GM12878 (cell line): ENCODE measurements at regions of chr11 and their contacts with region 1.

Region 1: GRCh38 chr11:78564490-78565467 is 9.9 kb downstream of the NARS2 start:
- DNase-seq: peak; percentile 40
- ATAC-seq: peak; percentile 67
- H3K4me3 ChIP-seq: no peak overlapping the region
- H3K27ac ChIP-seq: no peak overlapping the region
- H3K4me1 ChIP-seq: peaks cover 33% of the 10 kb centered on the region
- H3K27me3 ChIP-seq: no peaks in the 10 kb centered on the region
- CTCF ChIP-seq: peak; percentile 49 to 67 (median 54)
- EP300 ChIP-seq: no peak
- POLR2A ChIP-seq: no peak
- RAD21 ChIP-seq: peak; percentile 89

Region 2: DNA sequence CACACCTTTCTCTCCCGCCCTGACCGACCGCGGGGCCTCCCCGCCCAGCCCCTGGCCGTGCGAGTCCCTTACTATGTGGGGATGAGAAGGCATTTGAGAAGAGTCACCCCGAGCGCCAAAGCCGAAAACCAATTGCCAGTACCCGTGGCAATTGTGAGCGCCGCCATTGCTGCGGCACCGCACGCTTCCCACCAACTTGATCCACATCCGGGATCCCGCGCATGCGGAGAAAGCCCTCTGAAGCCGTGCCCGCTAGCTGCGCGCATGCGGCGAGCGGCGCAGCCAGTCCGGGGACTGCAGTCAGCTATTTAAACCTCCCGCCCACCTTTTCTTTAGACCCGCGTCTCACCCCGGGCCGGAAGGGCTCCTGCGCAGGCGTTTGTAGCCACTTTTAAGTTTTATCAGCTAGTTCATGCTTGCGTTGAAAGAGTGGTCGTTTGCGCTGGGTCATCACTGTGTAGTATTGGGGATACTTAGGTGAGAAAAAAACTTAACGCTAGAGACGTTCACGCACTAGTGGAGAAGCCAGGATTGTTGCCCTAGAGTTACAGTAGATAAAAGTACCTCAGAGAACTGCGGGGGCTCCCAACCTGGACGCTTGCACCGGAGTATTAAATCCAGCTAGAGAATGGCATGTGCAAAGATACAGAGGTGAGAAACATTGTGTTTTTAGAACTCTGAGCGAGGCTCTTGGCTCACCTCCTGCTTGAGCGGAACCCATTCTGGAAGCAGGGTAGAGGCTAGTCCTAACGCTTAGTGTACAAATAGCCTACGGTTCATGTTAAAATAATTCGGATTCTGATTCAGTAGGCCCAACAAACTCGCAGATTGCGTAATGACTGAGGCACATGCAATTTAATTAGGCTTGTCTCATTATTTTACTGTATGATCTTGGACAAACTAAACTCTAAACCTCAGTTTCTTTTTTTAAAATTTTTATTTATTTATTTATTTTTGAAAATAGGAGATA is 425.1 kb before region 1 on chr11 and contains the start of gene ALG8:
- CTCF ChIA-PET with region 1: interaction called, 4 read pairs
- POLR2A ChIA-PET with region 1: no interaction called
- RAD21 ChIA-PET with region 1: interaction called, 4 read pairs
- SMC1A ChIA-PET with region 1: interaction called, 3 read pairs
- in situ Hi-C with region 1: no loop called
- intact Hi-C with region 1: loop called (anchors 5 kb)
- DNase-seq: peak; percentile 90
- ATAC-seq: peak; percentile 96
- H3K4me3 ChIP-seq: peak within 1 kb of the TSS; percentile 88
- H3K27ac ChIP-seq: peak within 1 kb of the TSS; percentile 82
- H3K4me1 ChIP-seq: peaks cover 11% of the 10 kb centered on the region
- H3K27me3 ChIP-seq: no peaks in the 10 kb centered on the region
- CTCF ChIP-seq: no peak
- EP300 ChIP-seq: 0 out of 4 replicates have a peak, but pooled peaks of 1 of the 2 experiments have one; percentile 11
- POLR2A ChIP-seq: peak; percentile 95
- RAD21 ChIP-seq: no peak
- polyA plus RNA-seq, gene ALG8: 79.1 to 105 TPM

Region 3: DNA sequence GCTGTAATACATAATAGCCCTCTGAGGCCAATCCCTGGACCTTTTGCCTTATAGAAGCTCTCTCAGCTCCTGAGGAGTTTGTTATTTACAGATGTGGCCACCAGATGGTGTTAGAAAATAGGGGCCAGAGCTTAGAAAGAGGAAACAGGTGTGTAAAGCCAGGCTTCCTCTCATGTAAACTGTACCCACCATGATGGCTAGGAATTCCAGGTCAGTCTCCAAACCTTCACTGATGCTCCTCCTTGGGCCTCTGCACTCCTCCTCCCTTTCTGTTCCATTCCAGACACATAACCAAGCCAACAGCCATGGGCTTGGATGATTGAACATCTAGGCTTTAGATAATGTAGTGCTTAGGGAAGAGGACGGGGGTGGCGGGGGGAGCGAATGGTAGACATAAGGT is 336.3 kb before region 1 on chr11:
- CTCF ChIA-PET with region 1: interaction called, 181 read pairs
- POLR2A ChIA-PET with region 1: interaction called, 4 read pairs
- RAD21 ChIA-PET with region 1: interaction called, 124 read pairs
- SMC1A ChIA-PET with region 1: interaction called, 89 read pairs
- in situ Hi-C with region 1: loop called (anchors 5 kb)
- intact Hi-C with region 1: loop called (anchors 1 kb)
- DNase-seq: peak; percentile 51
- ATAC-seq: peak; percentile 88
- H3K4me3 ChIP-seq: no peak overlapping the region
- H3K27ac ChIP-seq: peak overlapping the region; percentile 75
- H3K4me1 ChIP-seq: peaks cover 37% of the 10 kb centered on the region
- H3K27me3 ChIP-seq: no peaks in the 10 kb centered on the region
- CTCF ChIP-seq: peak; percentile 52 to 69 (median 64); a peak in 5 of 6 replicates
- EP300 ChIP-seq: no peak
- POLR2A ChIP-seq: no peak
- RAD21 ChIP-seq: peak; percentile 99

Region 4: DNA sequence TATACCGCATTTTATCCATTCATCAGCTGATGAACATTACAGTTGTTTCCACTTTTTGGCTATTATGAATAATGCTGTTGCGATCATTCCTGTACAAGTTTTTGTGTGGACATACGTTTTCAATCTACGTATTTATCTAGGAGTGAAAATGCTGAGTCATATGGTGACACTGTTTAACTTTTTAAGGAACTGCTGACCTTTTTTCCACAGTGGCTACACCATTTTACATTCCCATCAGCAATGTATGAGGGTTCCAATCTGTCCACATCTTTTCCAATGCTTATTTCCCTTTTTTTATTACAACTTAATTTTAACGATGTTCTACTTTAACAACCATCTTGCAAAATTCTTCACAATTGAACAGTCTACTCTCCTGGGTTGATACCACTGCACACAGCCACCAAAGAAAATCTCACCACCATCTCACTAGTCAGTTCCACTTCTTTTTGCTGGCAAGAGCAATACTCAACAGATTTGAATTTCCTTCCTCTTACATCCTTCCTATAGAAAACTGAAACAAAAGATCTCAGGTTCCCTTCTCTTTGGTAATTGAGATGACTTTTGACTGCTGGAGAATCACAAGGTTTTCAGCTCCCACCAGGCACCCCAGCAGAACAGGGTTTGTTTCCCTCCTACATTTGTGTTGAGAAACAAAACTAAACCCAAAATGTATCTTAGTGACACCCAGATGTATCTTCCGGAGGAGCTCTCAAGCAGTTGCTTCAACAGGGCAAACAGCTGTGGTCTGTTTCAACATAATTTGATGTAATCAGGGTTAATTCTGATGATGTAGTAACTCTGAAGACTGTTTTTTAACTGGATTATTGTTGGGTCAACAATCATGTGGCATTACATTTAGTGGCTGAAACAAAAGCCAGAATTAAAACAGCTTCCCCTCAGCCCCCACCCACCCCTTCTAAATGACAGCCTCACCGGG is 140.2 kb before region 1 on chr11:
- CTCF ChIA-PET with region 1: interaction called, 280 read pairs
- POLR2A ChIA-PET with region 1: interaction called, 3 read pairs
- RAD21 ChIA-PET with region 1: interaction called, 137 read pairs
- SMC1A ChIA-PET with region 1: interaction called, 24 read pairs
- in situ Hi-C with region 1: loop called (anchors 5 kb)
- intact Hi-C with region 1: no loop called
- DNase-seq: peak; percentile 70
- ATAC-seq: peak; percentile 12
- H3K4me3 ChIP-seq: peak overlapping the region; percentile 18; the same call in 1 of the 2 replicates
- H3K27ac ChIP-seq: peak overlapping the region; percentile 73
- H3K4me1 ChIP-seq: peaks cover 66% of the 10 kb centered on the region
- H3K27me3 ChIP-seq: no peaks in the 10 kb centered on the region
- CTCF ChIP-seq: no peak
- EP300 ChIP-seq: no peak
- POLR2A ChIP-seq: no peak
- RAD21 ChIP-seq: no peak

Region 5: DNA sequence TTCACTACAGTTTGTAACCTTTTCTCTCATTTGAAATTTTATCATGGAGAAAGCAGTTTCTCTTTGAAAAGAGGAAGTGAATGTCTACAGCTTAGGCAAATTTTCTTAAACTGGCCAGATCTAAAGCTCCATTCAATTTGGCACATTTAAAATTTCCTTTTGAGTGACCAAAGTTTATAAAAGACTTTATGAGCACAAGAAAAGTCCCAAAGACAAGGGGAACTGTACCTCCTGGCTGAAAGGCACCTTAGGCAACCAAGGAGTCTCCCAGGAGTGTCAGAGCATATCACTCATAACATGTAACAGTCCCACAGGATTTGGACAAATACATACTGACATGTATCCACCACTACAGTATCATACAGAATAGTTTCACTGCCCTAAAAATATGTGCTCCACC is 31.4 kb before region 1 on chr11:
- CTCF ChIA-PET with region 1: interaction called, 19 read pairs
- POLR2A ChIA-PET with region 1: interaction called, 3 read pairs
- RAD21 ChIA-PET with region 1: interaction called, 7 read pairs
- SMC1A ChIA-PET with region 1: interaction called, 13 read pairs
- in situ Hi-C with region 1: no loop called
- intact Hi-C with region 1: no loop called
- DNase-seq: peak; percentile 44
- ATAC-seq: peak; percentile 86
- H3K4me3 ChIP-seq: no peak overlapping the region
- H3K27ac ChIP-seq: peak overlapping the region; percentile 74
- H3K4me1 ChIP-seq: peaks cover 21% of the 10 kb centered on the region
- H3K27me3 ChIP-seq: no peaks in the 10 kb centered on the region
- CTCF ChIP-seq: no peak
- EP300 ChIP-seq: no peak
- POLR2A ChIP-seq: no peak
- RAD21 ChIP-seq: no peak

Region 6: DNA sequence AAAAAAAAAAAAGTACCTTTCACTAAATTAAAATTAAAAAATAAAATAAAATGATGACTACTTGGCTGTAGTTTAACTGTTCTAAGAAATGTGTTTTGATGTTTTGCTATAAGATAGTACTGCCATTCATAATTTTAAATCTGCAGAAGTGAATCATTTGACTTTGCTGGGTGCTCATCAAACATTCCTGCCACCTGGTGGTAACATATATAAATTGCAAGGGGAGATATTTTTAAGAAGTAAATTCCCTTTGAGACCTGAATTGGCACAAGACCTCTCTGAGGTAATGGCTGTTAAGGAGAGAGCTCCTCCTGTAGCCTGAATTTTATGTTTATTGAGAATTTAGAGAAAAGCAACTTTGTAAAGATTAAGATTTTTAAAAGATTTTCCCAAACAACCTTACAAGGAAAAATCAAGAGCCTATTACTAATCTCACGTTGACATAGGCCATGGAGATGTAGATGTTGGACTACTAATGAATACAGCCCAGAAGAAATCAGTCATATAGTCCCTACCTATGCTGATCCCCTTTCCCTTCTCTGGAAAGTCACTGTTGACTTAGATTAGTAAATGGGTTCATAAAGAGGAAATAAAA is 21.8 kb after region 1 on chr11:
- CTCF ChIA-PET with region 1: interaction called, 23 read pairs
- POLR2A ChIA-PET with region 1: no interaction called
- RAD21 ChIA-PET with region 1: interaction called, 4 read pairs
- SMC1A ChIA-PET with region 1: interaction called, 7 read pairs
- in situ Hi-C with region 1: no loop called
- intact Hi-C with region 1: no loop called
- DNase-seq: no peak
- ATAC-seq: no peak
- H3K4me3 ChIP-seq: no peak overlapping the region
- H3K27ac ChIP-seq: no peak overlapping the region
- H3K4me1 ChIP-seq: no peaks in the 10 kb centered on the region
- H3K27me3 ChIP-seq: no peaks in the 10 kb centered on the region; a peak in 1 of 4 replicates
- CTCF ChIP-seq: peak; percentile 36 to 58 (median 42); a peak in 5 of 6 replicates
- EP300 ChIP-seq: no peak
- POLR2A ChIP-seq: no peak
- RAD21 ChIP-seq: peak; percentile 51

Region 7: DNA sequence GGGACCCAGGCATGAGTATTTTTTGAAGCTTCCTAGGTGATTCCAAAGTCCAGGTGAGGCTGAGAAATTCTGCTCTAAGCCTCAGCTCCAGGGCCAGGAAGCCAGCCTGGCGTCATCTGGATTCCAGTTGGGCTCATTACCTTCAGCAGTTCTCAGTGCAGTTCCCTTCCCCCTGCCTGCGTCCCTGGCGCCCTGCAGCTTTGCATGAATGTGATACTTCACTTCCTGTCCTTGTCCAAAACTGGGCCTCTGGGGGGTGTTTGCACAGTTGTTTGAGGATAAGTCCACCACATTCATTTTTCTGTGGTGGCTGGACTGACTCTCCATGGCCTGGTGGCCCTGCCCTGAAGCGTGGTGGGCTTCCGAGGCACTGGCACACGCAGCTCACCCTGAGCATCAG is 777.9 kb after region 1 on chr11:
- CTCF ChIA-PET with region 1: no interaction called
- POLR2A ChIA-PET with region 1: no interaction called
- RAD21 ChIA-PET with region 1: no interaction called
- SMC1A ChIA-PET with region 1: no interaction called
- in situ Hi-C with region 1: no loop called
- intact Hi-C with region 1: no loop called
- DNase-seq: no peak
- ATAC-seq: no peak
- H3K4me3 ChIP-seq: no peak overlapping the region
- H3K27ac ChIP-seq: no peak overlapping the region
- H3K4me1 ChIP-seq: no peaks in the 10 kb centered on the region
- H3K27me3 ChIP-seq: no peaks in the 10 kb centered on the region; a peak in 1 of 4 replicates
- CTCF ChIP-seq: no peak
- EP300 ChIP-seq: no peak
- POLR2A ChIP-seq: no peak
- RAD21 ChIP-seq: no peak